ENCODE measurements at regions of chr6 and their contacts with region 1.

Region 1: DNA sequence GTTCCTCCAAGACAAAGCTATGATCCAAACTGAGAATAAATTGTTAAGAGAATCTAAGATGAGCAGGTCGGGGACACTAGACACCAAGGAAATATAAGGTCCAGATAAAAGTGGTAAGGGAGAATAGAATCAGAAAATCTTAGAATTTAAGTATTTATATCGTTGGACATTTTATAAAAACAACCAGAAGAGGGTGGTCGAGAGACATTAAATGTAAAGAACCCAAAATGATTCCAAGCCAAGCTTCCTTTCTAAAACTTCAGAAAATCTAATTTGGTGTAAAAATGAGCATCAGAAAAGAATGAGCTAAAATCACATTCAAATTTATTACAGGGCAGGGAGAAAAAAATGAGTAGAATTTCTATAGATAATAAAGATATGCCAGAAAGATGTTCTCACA is 97.8 kb upstream of the OGFRL1 start:
- DNase-seq: peak; percentile 51
- H3K4me3 Mint-ChIP-seq: no peak overlapping the region
- H3K27ac Mint-ChIP-seq: no peak overlapping the region
- H3K4me1 Mint-ChIP-seq: no peaks in the 10 kb centered on the region
- H3K27me3 Mint-ChIP-seq: no peaks in the 10 kb centered on the region
- CTCF ChIP-seq: peak; percentile 36

Region 2: GRCh38 chr6:71056656-71057055 is 134.2 kb before region 1 on chr6:
- CTCF ChIA-PET with region 1: no interaction called
- POLR2A ChIA-PET with region 1: no interaction called
- intact Hi-C with region 1: no loop called
- DNase-seq: no peak
- H3K4me3 Mint-ChIP-seq: no peak overlapping the region
- H3K27ac Mint-ChIP-seq: no peak overlapping the region
- H3K4me1 Mint-ChIP-seq: no peaks in the 10 kb centered on the region
- H3K27me3 Mint-ChIP-seq: peaks cover 37% of the 10 kb centered on the region
- CTCF ChIP-seq: no peak

Region 3: DNA sequence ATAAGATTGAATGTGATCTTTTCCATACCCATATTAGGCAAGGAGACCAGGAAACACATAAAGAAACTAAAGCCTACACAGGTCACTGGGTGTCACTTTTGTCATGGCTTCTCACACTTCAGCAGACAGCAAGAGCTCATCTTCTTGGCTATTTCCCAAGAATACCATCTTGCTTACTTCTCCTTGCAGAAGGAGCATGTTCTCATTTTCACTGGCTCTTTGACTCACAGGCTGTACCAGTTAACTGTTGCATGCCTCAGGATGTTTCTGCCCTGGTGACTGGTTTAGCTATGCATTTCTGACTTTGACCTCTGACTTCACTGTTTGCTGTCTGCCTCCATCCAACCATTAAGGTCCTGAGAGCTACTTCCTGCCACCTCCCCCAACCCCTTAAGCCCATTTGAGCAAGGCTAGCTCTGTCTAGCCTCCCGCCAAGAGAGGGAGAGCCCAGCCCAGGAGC is 57.5 kb after region 1 on chr6:
- CTCF ChIA-PET with region 1: interaction called, 24 read pairs
- POLR2A ChIA-PET with region 1: interaction called, 3 read pairs
- intact Hi-C with region 1: no loop called
- DNase-seq: peak; percentile 48
- H3K4me3 Mint-ChIP-seq: no peak overlapping the region
- H3K27ac Mint-ChIP-seq: no peak overlapping the region
- H3K4me1 Mint-ChIP-seq: peaks cover 32% of the 10 kb centered on the region
- H3K27me3 Mint-ChIP-seq: no peaks in the 10 kb centered on the region
- CTCF ChIP-seq: no peak

Region 4: DNA sequence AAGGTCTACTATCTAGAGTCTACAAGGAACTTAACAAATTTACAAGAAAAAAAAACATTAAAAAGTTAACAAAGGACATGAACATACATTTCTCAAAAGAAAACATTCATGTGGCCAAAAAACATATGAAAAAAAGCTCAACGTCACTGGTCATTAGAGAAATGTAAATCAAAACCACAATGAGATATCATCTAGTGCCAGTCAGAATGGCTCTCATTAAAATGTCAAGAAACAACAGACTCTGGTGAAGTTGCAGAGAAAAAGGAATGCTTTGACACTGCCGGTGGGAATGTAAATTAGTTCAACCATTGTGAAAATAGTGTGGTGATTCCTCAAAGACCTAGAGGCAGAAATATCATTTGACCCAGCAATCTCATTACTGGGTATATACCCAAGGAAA is 146.1 kb after region 1 on chr6:
- CTCF ChIA-PET with region 1: interaction called, 16 read pairs
- POLR2A ChIA-PET with region 1: no interaction called
- intact Hi-C with region 1: no loop called
- DNase-seq: no peak
- H3K4me3 Mint-ChIP-seq: no peak overlapping the region
- H3K27ac Mint-ChIP-seq: no peak overlapping the region
- H3K4me1 Mint-ChIP-seq: no peaks in the 10 kb centered on the region
- H3K27me3 Mint-ChIP-seq: no peaks in the 10 kb centered on the region
- CTCF ChIP-seq: no peak

Region 5: DNA sequence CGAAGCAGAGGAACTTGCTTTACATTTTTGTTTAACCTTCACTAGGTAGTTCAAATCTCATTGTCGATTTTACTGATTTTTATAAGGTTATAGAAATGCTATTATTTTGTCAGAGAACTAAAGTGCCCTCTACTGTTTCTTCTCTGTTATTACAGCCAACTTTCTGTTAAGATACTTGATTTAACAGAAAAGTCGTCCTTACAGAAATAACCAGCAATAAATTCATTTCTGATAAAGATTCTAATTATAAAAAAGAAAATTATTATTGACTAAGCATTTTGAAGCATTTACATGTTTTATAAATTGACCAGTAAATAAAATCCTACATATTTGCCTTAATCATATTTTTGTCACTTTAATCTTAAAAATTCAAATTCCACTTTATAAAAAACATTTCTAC is 158.6 kb after region 1 on chr6:
- CTCF ChIA-PET with region 1: interaction called, 35 read pairs
- POLR2A ChIA-PET with region 1: interaction called, 3 read pairs
- intact Hi-C with region 1: loop called (anchors 1 kb)
- DNase-seq: peak; percentile 33
- H3K4me3 Mint-ChIP-seq: no peak overlapping the region
- H3K27ac Mint-ChIP-seq: no peak overlapping the region
- H3K4me1 Mint-ChIP-seq: no peaks in the 10 kb centered on the region
- H3K27me3 Mint-ChIP-seq: no peaks in the 10 kb centered on the region
- CTCF ChIP-seq: peak; percentile 71

Region 6: GRCh38 chr6:71510057-71510713 is 319.4 kb after region 1 on chr6:
- CTCF ChIA-PET with region 1: interaction called, 4 read pairs
- POLR2A ChIA-PET with region 1: no interaction called
- intact Hi-C with region 1: loop called (anchors 1 kb)
- DNase-seq: peak; percentile 67
- H3K4me3 Mint-ChIP-seq: no peak overlapping the region
- H3K27ac Mint-ChIP-seq: peak overlapping the region; percentile 7
- H3K4me1 Mint-ChIP-seq: peaks cover 6% of the 10 kb centered on the region
- H3K27me3 Mint-ChIP-seq: no peaks in the 10 kb centered on the region
- CTCF ChIP-seq: peak; percentile 64

Measured in MCF 10A (cell line).